Right cardiac atrium (tissue), 5 donors: ENCODE measurements at regions of chr16 and their contacts with region 1.

Region 1: DNA sequence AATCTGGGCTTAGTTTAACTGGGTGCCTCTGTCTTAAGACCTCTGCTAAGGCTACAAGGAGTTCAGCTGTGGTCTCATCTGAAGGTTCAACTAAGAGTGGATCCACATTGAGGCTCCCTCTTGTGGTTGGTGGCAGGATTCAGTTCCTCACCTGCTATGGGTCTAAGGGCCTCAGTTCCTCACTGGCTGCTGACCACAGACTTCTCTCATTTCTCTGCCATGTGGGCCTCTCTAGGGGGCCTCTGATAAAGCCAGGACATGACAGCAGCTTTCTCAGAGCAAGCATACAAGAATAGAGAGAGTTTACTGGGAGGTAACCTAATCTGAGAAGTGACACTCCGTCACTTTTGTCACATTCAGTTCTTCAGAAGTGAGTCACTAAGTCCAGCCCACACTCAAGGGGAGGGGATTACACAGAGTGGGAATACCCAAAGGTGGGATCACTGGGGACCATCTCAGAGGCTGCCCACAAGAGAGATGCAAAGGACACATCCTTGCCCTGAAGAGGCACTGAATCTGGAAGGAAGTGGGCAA is 19.2 kb upstream of the ABAT start:
- DNase-seq: no peak
- ATAC-seq: no peak
- H3K4me3 ChIP-seq: no peak overlapping the region
- H3K27ac ChIP-seq: no peak overlapping the region
- H3K4me1 ChIP-seq: no peaks in the 10 kb centered on the region
- H3K27me3 ChIP-seq: no peaks in the 10 kb centered on the region

Region 2: DNA sequence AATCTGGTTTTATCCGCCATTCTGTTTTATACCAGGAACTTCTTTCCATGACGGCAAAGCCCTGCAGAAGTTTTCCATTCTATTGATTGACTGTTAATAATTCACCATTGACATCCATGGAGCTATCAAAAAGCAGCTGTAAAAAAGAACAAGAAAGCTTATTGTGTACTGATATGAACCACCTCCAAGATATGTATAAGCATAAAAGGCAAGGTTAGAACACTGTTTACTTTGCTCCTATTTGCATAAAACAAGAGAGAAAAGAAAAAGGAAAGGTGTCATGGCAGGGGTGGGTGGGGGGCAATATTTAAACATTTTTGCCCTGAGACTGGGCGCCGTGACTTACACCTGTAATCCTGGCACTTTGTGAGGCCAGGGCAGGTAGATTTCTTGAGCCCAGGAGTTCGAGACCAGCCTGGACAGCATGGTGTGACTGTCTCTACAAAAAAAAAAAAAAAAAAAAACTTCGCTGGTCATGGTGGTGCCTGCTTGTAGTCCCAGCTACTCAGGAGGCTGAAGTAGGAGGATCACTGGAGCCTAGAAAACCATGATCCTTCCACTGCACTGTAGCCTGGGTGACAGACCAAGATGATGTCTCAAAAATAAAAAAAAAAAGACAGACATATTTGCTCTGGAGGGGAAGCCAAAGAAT is 117.4 kb before region 1 on chr16:
- intact Hi-C with region 1: no loop called
- DNase-seq: no peak
- ATAC-seq: no peak
- H3K4me3 ChIP-seq: no peak overlapping the region
- H3K27ac ChIP-seq: no peak overlapping the region
- H3K4me1 ChIP-seq: no peaks in the 10 kb centered on the region
- H3K27me3 ChIP-seq: no peaks in the 10 kb centered on the region

Region 3: DNA sequence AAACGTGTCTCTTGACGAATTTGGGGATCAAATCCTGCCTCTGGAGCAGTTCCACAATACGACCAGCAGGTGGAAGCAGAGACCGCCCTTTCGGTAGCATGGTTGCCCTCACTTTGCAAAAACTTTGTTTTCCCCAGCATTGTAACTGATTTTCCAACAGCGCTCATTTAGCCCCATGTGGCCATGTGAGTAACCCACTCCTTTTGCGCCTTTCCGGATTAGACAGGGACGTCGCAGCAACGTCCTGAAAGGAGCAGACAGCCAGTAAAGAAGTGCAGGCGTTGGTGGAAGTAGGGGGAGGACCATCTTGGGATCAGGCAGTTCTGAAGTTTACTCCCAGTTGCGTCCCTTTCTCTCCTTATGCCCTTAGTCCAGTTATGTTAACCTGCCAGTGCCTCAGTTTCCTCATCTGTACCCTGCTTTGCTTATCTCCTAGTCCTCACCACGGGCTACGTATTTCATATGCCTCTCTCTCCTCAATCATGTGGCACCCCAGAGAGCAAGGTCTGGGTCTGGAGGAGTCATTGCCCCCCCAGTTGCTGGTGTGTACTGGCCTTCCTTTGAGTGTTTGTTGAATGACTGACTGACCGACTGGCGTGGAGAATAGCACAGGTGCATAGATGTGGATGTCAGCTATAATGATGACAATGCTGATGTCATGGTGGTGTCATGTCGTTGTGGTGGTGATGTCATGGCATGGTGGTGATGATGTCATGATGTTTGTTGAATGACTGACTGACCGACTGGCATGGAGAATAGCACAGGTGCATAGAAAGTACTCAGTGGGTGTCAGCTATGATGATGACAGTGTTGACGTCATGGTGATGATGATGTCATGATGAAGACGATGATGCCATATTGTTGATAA is 87.3 kb before region 1 on chr16:
- intact Hi-C with region 1: loop called in 1 of 4 experiments (anchors 5 kb)
- DNase-seq: peak; percentile 64 to 80 (median 70)
- ATAC-seq: peak; percentile 86 to 87
- H3K4me3 ChIP-seq: no peak overlapping the region
- H3K27ac ChIP-seq: no peak overlapping the region
- H3K4me1 ChIP-seq: no peaks in the 10 kb centered on the region
- H3K27me3 ChIP-seq: no peaks in the 10 kb centered on the region

Region 4: DNA sequence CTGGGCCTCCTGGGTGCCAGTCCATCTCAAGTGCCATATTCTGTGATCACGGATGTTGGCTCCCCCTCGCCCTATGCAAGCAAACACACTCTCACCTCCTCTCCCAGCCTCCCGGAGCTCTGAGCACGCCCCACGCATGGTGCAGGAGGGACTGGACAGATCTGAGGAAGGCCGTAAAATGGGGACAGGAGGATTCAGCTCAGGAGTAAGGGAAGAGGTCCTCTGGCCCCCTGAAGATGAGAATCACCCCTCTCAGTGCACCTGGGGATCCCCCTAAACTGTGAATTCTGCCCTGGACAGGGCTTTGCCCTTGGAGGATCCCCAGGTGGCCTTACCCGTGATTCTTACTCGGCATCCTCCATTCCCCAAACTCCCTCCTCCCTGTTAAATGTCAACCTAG is 126.5 kb after region 1 on chr16:
- intact Hi-C with region 1: loop called in 1 of 4 experiments (anchors 5 kb)
- DNase-seq: no peak
- ATAC-seq: no peak
- H3K4me3 ChIP-seq: no peak overlapping the region
- H3K27ac ChIP-seq: no peak overlapping the region
- H3K4me1 ChIP-seq: no peaks in the 10 kb centered on the region
- H3K27me3 ChIP-seq: no peaks in the 10 kb centered on the region

Region 5: DNA sequence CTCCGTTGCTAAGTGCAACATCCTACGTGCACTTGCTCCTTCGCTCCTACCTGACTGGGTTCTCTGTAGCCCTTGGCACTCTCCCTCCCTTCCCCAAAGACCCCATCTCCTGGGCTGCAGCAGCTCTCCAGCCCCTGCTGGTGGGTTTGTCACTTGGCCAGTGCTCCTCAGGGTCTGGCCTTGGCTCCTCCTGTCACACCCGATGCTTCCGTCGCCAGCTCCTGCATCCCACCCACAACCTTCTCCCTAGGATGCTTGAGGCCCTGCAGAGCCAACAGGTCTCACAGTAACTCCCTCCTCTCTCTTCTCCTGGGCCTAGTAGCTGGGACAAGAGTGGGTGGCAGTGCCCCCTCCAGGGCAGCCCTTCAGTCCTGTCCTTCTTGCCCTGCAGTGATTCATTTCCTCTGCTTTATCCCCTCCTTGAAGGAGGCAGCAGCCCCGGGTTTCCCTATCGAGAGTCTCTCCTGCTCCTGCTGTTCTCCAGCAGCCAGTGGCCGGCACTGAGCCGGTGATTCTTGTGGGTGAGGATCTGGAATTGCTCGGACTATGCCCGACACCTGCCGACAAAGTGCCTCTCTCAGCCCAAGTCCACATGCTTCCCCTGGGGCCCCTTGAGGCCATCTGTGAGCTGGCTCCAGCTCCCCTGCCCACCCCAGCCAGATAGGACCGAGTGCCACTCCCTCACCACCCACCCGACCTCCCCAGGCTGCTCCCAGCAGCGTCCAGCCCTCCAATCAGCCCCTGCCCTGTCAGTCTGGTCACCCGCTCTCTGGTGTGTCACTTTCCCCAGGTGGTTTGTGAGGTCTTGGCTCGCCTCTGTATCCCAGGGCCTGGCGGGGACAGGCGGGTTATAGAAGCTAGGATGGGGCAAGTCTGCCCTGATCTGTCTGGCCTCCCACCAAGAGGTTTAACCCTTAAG is 230.7 kb after region 1 on chr16:
- intact Hi-C with region 1: loop called in 3 of 4 experiments (anchors 2 to 10 kb)
- DNase-seq: peak in 2 of 3 donors; percentile 60 to 63
- ATAC-seq: peak; percentile 22 to 32
- H3K4me3 ChIP-seq: no peak overlapping the region
- H3K27ac ChIP-seq: no peak overlapping the region
- H3K4me1 ChIP-seq: peaks cover 2% of the 10 kb centered on the region
- H3K27me3 ChIP-seq: no peaks in the 10 kb centered on the region